Heart right ventricle (tissue), 16 donors: ENCODE measurements at regions of chr11 and their contacts with region 1.

Region 1: DNA sequence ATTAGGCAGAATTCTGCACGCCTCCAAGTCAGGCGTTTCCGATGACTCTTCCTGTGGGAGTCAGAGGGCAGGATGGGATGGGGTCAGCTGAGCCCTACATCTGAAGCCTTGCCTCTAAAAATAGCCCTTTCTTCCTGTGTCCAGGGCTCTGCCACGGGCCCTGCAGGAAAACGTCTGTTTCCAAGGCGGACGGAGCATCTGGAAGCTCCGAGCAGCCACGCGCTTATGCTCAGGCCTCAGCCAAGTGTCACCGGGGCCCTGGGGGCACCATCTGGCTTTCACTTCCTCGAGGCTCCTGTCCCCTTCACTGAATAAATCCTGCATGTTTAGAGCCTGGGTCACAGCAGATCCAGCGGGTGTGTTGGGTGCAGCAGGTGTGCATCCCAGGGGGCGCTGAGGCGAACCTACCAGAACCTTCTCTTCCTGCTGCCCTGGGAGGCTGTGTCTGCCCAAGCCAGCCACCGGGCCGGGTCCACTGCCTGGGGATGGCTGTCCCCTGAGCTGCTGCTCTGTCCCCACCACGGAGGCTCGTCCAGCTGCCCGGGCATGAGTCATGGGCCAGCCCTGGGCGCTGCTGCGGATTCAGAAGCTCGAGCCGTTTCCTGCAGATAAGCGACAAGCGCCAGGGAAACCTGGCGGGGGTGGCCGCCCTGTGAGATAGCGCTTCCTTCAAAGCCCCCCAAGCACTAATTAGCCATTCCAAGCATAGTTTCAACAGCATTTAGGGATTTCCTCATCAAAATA is 32.0 kb upstream of the LINC01488 start:
- DNase-seq: peak; percentile 80 to 85
- ATAC-seq: peak; percentile 68 to 86 (median 81)
- H3K4me3 ChIP-seq: no peak overlapping the region
- H3K27ac ChIP-seq: peak overlapping the region; percentile 71 to 94 (median 85)
- H3K4me1 ChIP-seq: peaks cover 17 to 55% (median 33%) of the 10 kb centered on the region in 9 donors
- H3K27me3 ChIP-seq: no peaks in the 10 kb centered on the region
- CTCF ChIP-seq: peak in 1 of 9 donors; percentile 13

Region 2: GRCh38 chr11:69497221-69497787 is 47.8 kb after region 1 on chr11:
- intact Hi-C with region 1: loop called in 3 of 10 experiments (anchors 1 to 5 kb)
- DNase-seq: peak; percentile 84 to 88
- ATAC-seq: peak; percentile 94 to 97 (median 95)
- H3K4me3 ChIP-seq: no peak overlapping the region
- H3K27ac ChIP-seq: peak overlapping the region; percentile 63 to 92 (median 90)
- H3K4me1 ChIP-seq: peaks cover 16 to 55% (median 35%) of the 10 kb centered on the region in 9 donors
- H3K27me3 ChIP-seq: no peaks in the 10 kb centered on the region
- CTCF ChIP-seq: no peak